ENCODE measurements at regions of chr15 and their contacts with region 1.

Region 1: GRCh38 chr15:74382004-74382816 is 14.8 kb upstream of the CYP11A1 start:
- DNase-seq: peak; percentile 81
- H3K4me3 ChIP-seq: no peak overlapping the region
- H3K27ac ChIP-seq: peak overlapping the region in 1 of 2 donors; percentile 25
- H3K4me1 ChIP-seq: no peaks in the 10 kb centered on the region
- H3K27me3 ChIP-seq: no peaks in the 10 kb centered on the region
- CTCF ChIP-seq: peak; percentile 88 to 94 (median 92)
- POLR2A ChIP-seq: no peak

Region 2: DNA sequence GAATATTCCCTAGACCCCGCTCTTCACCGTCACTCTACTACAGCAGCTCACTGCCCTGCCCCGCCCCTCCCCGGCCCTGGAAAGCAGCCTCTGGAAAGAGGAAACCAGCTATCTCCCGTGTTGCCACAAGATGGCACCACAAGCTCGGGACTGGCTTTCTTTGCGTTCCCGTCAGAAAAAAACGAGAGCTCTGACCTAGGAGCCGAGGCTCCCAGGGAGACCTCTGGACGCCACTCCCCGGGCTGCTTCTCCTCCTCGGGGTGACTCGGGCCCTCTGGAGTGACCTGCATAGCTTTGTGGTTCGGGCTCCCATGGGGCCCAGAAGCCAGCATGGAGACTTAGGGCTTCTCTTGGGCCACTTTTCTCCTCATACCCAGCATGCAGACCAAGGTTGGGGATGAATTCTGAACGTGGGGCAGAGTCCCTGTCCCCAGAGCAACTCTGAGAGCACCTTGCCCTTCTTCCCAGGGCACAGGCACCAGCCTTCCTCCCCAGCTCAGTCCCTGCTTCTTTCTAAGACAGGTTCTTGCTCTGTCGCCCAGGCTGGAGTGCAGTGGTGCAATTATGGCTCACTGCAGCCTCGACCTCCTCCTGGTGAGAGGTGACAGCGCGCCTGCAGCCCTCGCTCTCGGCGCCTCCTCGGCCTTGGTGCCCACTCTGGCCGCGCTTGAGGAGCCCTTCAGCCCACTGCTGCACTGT is 409.1 kb before region 1 on chr15:
- intact Hi-C with region 1: no loop called
- DNase-seq: peak; percentile 86 to 88
- H3K4me3 ChIP-seq: no peak overlapping the region
- H3K27ac ChIP-seq: no peak overlapping the region
- H3K4me1 ChIP-seq: peaks cover 0 to 8% of the 10 kb centered on the region in 2 donors
- H3K27me3 ChIP-seq: no peaks in the 10 kb centered on the region
- CTCF ChIP-seq: peak; percentile 88 to 97 (median 93)
- POLR2A ChIP-seq: no peak

Region 3: GRCh38 chr15:74438721-74439316 is 56.6 kb after region 1 on chr15:
- intact Hi-C with region 1: loop called (anchors 2 kb)
- DNase-seq: peak; percentile 71
- H3K4me3 ChIP-seq: no peak overlapping the region
- H3K27ac ChIP-seq: no peak overlapping the region
- H3K4me1 ChIP-seq: no peaks in the 10 kb centered on the region
- H3K27me3 ChIP-seq: no peaks in the 10 kb centered on the region
- CTCF ChIP-seq: peak; percentile 82 to 92 (median 89)
- POLR2A ChIP-seq: no peak

Region 4: DNA sequence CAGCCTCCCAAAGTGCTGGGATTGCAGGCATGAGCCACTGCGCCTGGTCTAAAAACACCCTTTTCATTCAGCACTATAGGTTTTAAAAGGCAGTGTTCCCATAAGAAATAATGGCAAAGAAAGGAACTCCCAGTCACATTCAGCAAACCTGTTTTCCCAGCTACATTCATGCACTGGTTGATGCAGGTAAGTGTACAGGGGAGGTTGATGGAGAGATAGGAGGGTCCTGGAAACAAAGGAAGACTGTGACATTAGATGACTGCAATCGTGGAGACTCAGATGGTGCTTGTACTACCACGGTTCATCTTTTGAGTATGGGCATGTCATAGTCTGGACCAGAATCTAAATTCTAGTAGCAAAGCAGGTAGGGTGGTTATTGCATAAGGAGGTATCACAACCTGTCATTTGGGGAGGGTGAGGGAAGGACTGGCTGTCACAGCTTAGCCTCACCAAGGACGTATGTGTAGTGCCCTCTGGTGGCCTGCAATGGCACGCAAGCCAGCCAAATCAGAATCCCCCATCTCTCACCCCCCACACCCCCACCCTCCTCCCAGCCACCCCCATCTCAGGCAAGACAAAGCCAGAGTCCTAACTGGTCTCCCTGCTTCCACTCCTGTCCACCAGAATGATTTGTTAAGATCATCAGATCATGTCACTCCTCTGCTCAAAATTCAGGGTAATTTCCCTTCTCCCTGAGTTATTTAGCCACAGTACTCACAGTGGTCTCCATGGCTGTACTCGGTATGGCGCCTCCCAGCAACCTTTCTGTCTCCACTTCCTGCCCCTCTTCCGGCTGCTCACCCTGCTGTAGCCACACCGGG is 107.5 kb after region 1 on chr15:
- intact Hi-C with region 1: no loop called
- DNase-seq: peak; percentile 22 to 24
- H3K4me3 ChIP-seq: no peak overlapping the region
- H3K27ac ChIP-seq: no peak overlapping the region
- H3K4me1 ChIP-seq: no peaks in the 10 kb centered on the region
- H3K27me3 ChIP-seq: no peaks in the 10 kb centered on the region
- CTCF ChIP-seq: peak; percentile 20 to 59 (median 43)
- POLR2A ChIP-seq: no peak

Region 5: GRCh38 chr15:74505837-74506514 is 123.8 kb after region 1 on chr15:
- intact Hi-C with region 1: no loop called
- DNase-seq: no peak
- H3K4me3 ChIP-seq: no peak overlapping the region
- H3K27ac ChIP-seq: no peak overlapping the region
- H3K4me1 ChIP-seq: no peaks in the 10 kb centered on the region
- H3K27me3 ChIP-seq: no peaks in the 10 kb centered on the region
- CTCF ChIP-seq: no peak
- POLR2A ChIP-seq: no peak